Left lung (tissue), 14 donors: ENCODE measurements at regions of chr4 and their contacts with region 1.

Region 1: GRCh38 chr4:41214136-41214824 is at the start of gene APBB2:
- DNase-seq: peak; percentile 94 to 99 (median 94)
- ATAC-seq: peak; percentile 87
- H3K4me3 ChIP-seq: peak within 1 kb of the TSS; percentile 75 to 93
- H3K27ac ChIP-seq: peak within 1 kb of the TSS; percentile 84 to 88
- H3K4me1 ChIP-seq: peaks cover 6 to 53% of the 10 kb centered on the region in 2 donors
- H3K27me3 ChIP-seq: peaks cover 0 to 64% of the 10 kb centered on the region in 2 donors
- CTCF ChIP-seq: peak; percentile 75 to 80
- polyA plus RNA-seq, gene APBB2: 42.5 to 57.7 (median 50.4) TPM

Region 2: GRCh38 chr4:40924793-40925117 is 289.5 kb before region 1 on chr4:
- intact Hi-C with region 1: loop called in 1 of 2 experiments (anchors 5 kb)
- DNase-seq: no peak
- ATAC-seq: no peak
- H3K4me3 ChIP-seq: no peak overlapping the region
- H3K27ac ChIP-seq: no peak overlapping the region
- H3K4me1 ChIP-seq: peaks cover 0 to 13% of the 10 kb centered on the region in 2 donors
- H3K27me3 ChIP-seq: no peaks in the 10 kb centered on the region
- CTCF ChIP-seq: no peak

Region 3: DNA sequence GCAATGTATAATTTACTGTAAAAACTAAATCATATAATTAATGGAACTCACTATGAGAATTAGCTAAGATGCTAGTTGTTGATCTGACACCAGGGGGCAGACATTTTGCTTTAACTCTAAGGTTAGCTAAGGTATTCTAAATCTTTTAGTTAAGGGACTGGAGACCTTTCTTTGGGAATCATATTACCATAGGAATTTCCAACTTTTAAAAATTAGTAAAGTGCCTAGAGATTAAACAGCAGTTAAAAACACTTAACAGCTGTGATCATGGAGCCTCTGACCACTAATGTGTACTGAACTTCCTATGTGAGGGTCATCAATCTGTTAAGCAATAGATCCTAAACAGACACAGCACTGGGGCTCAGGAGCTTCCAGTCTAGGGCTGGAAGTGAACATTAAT is 237.9 kb before region 1 on chr4:
- intact Hi-C with region 1: loop called in 1 of 2 experiments (anchors 5 kb)
- DNase-seq: peak in 1 of 4 donors; percentile 65
- ATAC-seq: peak; percentile 77
- H3K4me3 ChIP-seq: no peak overlapping the region
- H3K27ac ChIP-seq: no peak overlapping the region
- H3K4me1 ChIP-seq: peaks cover 0 to 3% of the 10 kb centered on the region in 2 donors
- H3K27me3 ChIP-seq: no peaks in the 10 kb centered on the region
- CTCF ChIP-seq: peak; percentile 62 to 67

Region 4: DNA sequence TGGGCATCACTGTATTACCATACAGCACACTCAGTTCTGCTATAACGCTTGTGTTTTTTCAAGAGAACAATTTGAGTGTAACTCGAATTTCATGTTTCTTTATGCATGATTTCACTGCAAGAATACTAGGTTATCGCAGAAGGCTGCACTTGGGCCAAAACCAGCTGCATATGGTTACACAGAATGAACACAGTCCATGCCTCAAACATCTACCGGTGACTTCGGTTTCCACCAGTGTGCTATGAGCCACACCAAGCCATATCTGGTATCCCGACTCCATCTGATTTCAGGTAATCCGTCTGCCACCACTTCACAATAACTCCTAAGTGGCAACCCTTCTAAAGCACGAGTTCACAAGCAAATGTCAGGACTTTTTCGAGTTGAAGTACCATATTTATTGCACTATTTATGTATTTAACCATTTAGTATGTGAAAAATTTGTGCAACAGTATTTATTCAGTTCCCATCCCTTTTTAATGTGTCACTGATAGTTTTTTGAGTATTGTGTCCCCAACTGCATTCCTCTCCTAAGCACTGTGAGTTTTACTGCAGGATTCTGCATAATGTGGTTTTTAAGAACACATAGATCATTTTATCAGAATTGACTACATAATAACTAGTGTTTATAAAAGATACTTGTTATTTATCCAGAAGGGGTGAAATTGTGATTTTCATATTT is 111.7 kb before region 1 on chr4:
- intact Hi-C with region 1: no loop called
- DNase-seq: no peak
- ATAC-seq: peak; percentile 54
- H3K4me3 ChIP-seq: no peak overlapping the region
- H3K27ac ChIP-seq: no peak overlapping the region
- H3K4me1 ChIP-seq: peaks cover 0 to 10% of the 10 kb centered on the region in 2 donors
- H3K27me3 ChIP-seq: no peaks in the 10 kb centered on the region
- CTCF ChIP-seq: no peak

Region 5: GRCh38 chr4:41334183-41334582 is 119.9 kb after region 1 on chr4:
- intact Hi-C with region 1: no loop called
- DNase-seq: peak in 2 of 4 donors; percentile 31 to 67
- ATAC-seq: peak; percentile 85
- H3K4me3 ChIP-seq: no peak overlapping the region
- H3K27ac ChIP-seq: no peak overlapping the region
- H3K4me1 ChIP-seq: peaks cover 0 to 3% of the 10 kb centered on the region in 2 donors
- H3K27me3 ChIP-seq: no peaks in the 10 kb centered on the region
- CTCF ChIP-seq: no peak